Heart right ventricle (tissue), 16 donors: ENCODE measurements at regions of chr4 and their contacts with region 1.

Region 1: DNA sequence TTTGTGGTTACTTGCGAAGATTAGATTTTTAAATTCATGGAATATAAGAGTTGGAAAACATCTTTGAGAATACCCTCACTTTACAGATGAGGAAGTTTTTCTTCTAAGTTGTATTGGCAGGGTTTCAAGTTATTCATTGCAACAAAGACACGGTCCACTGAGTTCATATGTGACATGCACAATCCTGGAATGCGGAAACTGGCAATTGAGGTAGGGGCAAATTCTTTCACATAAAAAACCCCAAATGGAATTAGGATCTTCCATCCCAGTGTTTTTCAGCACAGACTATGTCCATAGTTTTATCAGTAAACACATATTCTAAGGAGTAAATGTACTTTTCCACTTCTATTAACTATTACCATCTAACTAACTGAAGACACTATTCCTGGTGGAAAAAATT is 81.8 kb upstream of the NAP1L5 start:
- DNase-seq: no peak
- ATAC-seq: no peak
- H3K4me3 ChIP-seq: no peak overlapping the region
- H3K27ac ChIP-seq: no peak overlapping the region
- H3K4me1 ChIP-seq: no peaks in the 10 kb centered on the region
- H3K27me3 ChIP-seq: no peaks in the 10 kb centered on the region
- CTCF ChIP-seq: no peak

Region 2: DNA sequence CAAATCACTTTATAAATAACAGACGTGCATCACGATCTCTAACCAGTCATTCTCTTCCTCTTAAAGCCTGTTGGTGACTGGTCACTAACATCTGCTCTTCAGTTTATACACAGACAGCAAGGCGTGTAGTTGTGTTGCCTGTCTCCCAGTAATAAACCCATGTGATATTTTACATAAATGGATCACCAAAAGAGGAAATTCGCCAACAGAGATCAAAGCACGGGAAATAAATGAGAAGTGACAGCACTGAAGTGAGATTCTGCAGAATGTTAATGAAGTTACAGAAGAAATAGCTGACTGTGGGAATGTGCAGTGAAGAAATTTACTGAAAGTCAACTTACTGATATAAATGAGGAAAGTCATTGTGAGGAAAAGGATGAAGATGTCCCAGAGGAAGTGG is 1797.6 kb before region 1 on chr4:
- intact Hi-C with region 1: loop called in 1 of 10 experiments (anchors 5 kb)
- DNase-seq: no peak
- ATAC-seq: peak in 7 of 8 donors; percentile 47 to 81 (median 60)
- H3K4me3 ChIP-seq: no peak overlapping the region
- H3K27ac ChIP-seq: peak overlapping the region in 1 of 10 donors; percentile 82
- H3K4me1 ChIP-seq: peaks cover 0 to 31% (median under 1%) of the 10 kb centered on the region in 9 donors
- H3K27me3 ChIP-seq: no peaks in the 10 kb centered on the region
- CTCF ChIP-seq: no peak